Psoas muscle (tissue), 8 donors: ENCODE measurements at regions of chr5 and their contacts with region 1.

Region 1: DNA sequence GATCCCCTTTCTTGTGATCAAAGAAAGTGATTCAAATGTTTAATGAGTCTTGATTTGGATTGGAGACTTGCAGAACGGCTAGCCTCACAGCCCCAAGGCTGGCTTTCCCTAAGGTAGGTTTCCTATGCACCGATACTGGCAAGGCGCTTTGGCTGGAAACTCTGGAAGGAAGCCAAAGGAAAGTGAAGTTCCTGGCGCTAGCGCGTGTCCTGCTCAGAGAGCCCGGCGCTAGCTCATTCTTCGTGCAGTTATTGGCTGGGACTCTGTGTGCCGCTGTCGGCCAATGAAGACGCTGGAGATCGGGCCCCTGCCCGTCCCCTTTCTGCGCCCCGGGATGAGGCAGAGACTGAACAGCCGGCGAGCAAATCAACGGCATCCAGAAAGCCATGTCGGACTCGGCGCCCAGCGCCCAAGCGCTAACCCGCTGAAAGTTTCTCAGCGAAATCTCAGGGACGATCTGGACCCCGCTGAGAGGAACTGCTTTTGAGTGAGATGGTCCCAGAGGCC is at the start of gene PCDHGC3:
- DNase-seq: peak; percentile 92 to 96
- ATAC-seq: peak; percentile 98
- H3K4me3 ChIP-seq: peak within 1 kb of the TSS; percentile 77
- H3K27ac ChIP-seq: peak within 1 kb of the TSS; percentile 81
- H3K4me1 ChIP-seq: peaks cover 38% of the 10 kb centered on the region
- H3K27me3 ChIP-seq: peaks cover 0 to 6% (median 0%) of the 10 kb centered on the region in 3 donors
- CTCF ChIP-seq: peak; percentile 29
- total RNA-seq, gene PCDHGC3: 7.3 to 25.2 (median 14.2) TPM

Region 2: DNA sequence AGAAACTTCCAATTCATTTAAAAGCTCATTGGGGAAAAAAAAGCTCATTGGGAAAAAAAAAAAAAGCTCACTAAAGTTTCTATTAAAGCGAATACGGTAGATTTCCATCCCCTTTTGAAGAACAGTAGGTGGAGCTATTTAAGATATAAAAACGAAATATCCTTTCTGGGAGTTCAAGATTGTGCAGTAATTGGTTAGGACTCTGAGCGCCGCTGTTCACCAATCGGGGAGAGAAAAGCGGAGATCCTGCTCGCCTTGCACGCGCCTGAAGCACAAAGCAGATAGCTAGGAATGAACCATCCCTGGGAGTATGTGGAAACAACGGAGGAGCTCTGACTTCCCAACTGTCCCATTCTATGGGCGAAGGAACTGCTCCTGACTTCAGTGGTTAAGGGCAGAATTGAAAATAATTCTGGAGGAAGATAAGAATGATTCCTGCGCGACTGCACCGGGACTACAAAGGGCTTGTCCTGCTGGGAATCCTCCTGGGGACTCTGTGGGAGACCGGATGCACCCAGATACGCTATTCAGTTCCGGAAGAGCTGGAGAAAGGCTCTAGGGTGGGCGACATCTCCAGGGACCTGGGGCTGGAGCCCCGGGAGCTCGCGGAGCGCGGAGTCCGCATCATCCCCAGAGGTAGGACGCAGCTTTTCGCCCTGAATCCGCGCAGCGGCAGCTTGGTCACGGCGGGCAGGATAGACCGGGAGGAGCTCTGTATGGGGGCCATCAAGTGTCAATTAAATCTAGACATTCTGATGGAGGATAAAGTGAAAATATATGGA is 45.2 kb before region 1 on chr5 and contains the start of gene PCDHGA12:
- intact Hi-C with region 1: loop called (anchors 5 kb)
- DNase-seq: peak; percentile 69 to 82
- ATAC-seq: peak; percentile 90 to 95 (median 90)
- H3K4me3 ChIP-seq: peak within 1 kb of the TSS; percentile 64
- H3K27ac ChIP-seq: peak within 1 kb of the TSS; percentile 56
- H3K4me1 ChIP-seq: no peaks in the 10 kb centered on the region
- H3K27me3 ChIP-seq: peaks cover 0 to 11% (median 6%) of the 10 kb centered on the region in 3 donors
- CTCF ChIP-seq: peak; percentile 66
- total RNA-seq, gene PCDHGA12: 2.6 to 6.9 (median 3.6) TPM

Region 3: GRCh38 chr5:141512390-141512910 is 36.8 kb after region 1 on chr5:
- intact Hi-C with region 1: loop called in 1 of 2 experiments (anchors 5 kb)
- DNase-seq: peak; percentile 87 to 90
- ATAC-seq: peak; percentile 23 to 54 (median 35)
- H3K4me3 ChIP-seq: peak overlapping the region; percentile 61
- H3K27ac ChIP-seq: peak overlapping the region; percentile 90
- H3K4me1 ChIP-seq: peaks cover 61% of the 10 kb centered on the region
- H3K27me3 ChIP-seq: no peaks in the 10 kb centered on the region
- CTCF ChIP-seq: peak; percentile 83

Region 4: GRCh38 chr5:141524604-141525597 is 49.2 kb after region 1 on chr5:
- intact Hi-C with region 1: loop called in 1 of 2 experiments (anchors 2 kb)
- DNase-seq: peak; percentile 84 to 91
- ATAC-seq: peak; percentile 78 to 84 (median 82)
- H3K4me3 ChIP-seq: no peak overlapping the region
- H3K27ac ChIP-seq: peak overlapping the region; percentile 77
- H3K4me1 ChIP-seq: peaks cover 65% of the 10 kb centered on the region
- H3K27me3 ChIP-seq: no peaks in the 10 kb centered on the region
- CTCF ChIP-seq: peak; percentile 99